ENCODE measurements at regions of chr3 and their contacts with region 1.

Region 1: DNA sequence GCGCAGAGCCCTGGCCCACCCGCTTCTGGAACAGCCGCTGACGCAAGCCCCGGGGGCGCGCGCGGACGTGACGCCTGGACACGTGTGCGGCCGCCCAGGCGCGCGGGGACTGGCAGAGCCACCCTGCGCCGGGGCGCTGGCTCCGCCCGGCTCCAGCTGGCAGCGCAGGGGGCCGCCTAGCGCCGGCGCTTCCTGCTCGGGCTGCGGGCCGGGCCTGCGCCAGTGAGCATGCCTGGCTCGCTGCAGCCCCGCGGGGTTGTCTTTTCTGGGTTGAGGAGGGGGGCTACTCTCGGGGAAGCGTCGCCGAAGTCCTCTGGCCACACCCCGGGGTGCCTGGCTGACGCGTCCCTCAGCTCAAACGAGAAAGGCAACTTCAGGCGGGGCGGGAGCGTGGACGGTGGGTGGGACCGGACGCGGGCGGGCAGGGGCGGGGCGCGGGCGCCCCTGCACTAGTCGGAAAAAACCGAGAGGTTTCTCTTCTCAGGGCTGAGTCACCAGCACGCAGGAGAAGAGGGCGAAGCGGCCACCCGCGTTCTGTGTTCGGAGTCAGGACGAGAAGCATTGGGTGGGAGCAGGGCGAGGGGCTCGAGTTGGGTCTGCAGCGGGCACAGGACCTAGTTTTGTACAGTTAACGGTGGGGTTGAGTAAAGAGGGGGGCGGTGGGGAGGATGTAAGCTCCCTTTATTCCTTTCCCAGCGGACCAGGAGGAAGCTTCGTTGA is at the start of gene SIAH2:
- DNase-seq: peak; percentile 71
- ATAC-seq: peak; percentile 78
- H3K4me3 ChIP-seq: peak within 1 kb of the TSS; percentile 94
- H3K27ac ChIP-seq: peak within 1 kb of the TSS; percentile 77
- H3K4me1 ChIP-seq: peaks cover 29% of the 10 kb centered on the region
- H3K27me3 ChIP-seq: no peaks in the 10 kb centered on the region
- CTCF ChIP-seq: no peak
- EP300 ChIP-seq: no peak; a peak in 1 of 4 replicates
- POLR2A ChIP-seq: peak; percentile 86
- RAD21 ChIP-seq: no peak
- polyA plus RNA-seq, gene SIAH2: 6.1 to 14.2 TPM

Region 2: GRCh38 chr3:150546226-150547044 is 216.8 kb before region 1 on chr3 and contains the starts of genes EIF2A and SERP1:
- CTCF ChIA-PET with region 1: interaction called, 5 read pairs
- POLR2A ChIA-PET with region 1: interaction called, 4 read pairs
- RAD21 ChIA-PET with region 1: interaction called, 11 read pairs
- SMC1A ChIA-PET with region 1: interaction called, 5 read pairs
- in situ Hi-C with region 1: no loop called
- intact Hi-C with region 1: loop called (anchors 2 kb)
- DNase-seq: peak; percentile 98
- ATAC-seq: peak; percentile 92
- H3K4me3 ChIP-seq: peak within 1 kb of the TSS; percentile 97
- H3K27ac ChIP-seq: peak within 1 kb of the TSS; percentile 96
- H3K4me1 ChIP-seq: peaks cover 3% of the 10 kb centered on the region; the same call in 1 of the 2 replicates
- H3K27me3 ChIP-seq: no peaks in the 10 kb centered on the region
- CTCF ChIP-seq: no peak
- EP300 ChIP-seq: peak in 1 of 2 experiments; percentile 44; a peak in 1 of 4 replicates
- POLR2A ChIP-seq: peak; percentile 97
- RAD21 ChIP-seq: no peak
- polyA plus RNA-seq, gene EIF2A: 126 to 130 TPM
- polyA plus RNA-seq, gene SERP1: 31.1 to 46.7 TPM

Region 3: DNA sequence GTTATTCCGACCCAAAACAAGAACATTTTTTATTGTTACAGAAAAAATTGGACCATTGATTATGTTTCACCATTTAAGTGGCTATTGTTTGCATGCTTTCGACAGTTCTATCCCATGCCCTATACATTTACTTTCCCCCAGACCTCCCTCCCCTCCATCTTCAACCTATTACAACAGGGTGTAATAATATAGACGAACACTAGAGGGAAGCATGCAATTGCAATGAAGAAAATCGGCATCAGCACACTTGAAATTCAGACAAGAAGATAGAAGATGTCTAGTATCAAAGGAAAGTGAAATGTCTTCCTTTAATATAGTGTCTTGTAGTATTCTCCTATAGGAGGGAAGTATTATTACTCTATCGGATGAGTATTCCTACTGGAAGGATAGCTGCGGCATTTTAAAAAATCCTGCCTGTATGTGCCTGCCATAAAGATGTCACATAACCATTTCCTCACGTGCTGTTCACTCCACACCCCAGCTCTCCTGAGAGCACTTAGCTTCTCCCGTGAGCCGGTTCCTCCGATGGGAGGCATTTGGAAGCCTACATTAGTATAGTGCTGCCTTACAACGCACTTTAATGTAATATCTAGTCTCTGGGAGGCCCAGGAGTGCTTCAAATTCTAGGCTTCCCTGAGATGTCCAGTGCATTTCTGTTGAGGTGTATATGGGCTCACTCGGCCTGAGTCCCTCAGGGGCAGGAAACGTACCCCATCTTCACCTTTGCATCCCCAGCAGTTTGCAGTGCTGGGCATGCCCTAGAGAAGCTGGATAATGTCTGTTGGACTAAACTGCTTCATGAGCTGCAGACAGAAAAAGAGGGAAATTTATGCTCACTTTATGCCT is 41.8 kb before region 1 on chr3:
- CTCF ChIA-PET with region 1: interaction called, 29 read pairs
- POLR2A ChIA-PET with region 1: interaction called, 8 read pairs
- RAD21 ChIA-PET with region 1: interaction called, 36 read pairs
- SMC1A ChIA-PET with region 1: interaction called, 68 read pairs
- in situ Hi-C with region 1: no loop called
- intact Hi-C with region 1: loop called (anchors 5 kb)
- DNase-seq: no peak
- ATAC-seq: peak; percentile 93
- H3K4me3 ChIP-seq: no peak overlapping the region
- H3K27ac ChIP-seq: no peak overlapping the region
- H3K4me1 ChIP-seq: no peaks in the 10 kb centered on the region
- H3K27me3 ChIP-seq: no peaks in the 10 kb centered on the region
- CTCF ChIP-seq: peak; percentile 70 to 82 (median 79); a peak in 5 of 6 replicates
- EP300 ChIP-seq: no peak
- POLR2A ChIP-seq: no peak
- RAD21 ChIP-seq: peak; percentile 100

Region 4: GRCh38 chr3:150749255-150749654 is 14.0 kb before region 1 on chr3:
- CTCF ChIA-PET with region 1: interaction called, 7 read pairs
- POLR2A ChIA-PET with region 1: interaction called, 12 read pairs
- RAD21 ChIA-PET with region 1: interaction called, 4 read pairs
- SMC1A ChIA-PET with region 1: interaction called, 11 read pairs
- in situ Hi-C with region 1: no loop called
- intact Hi-C with region 1: no loop called
- DNase-seq: no peak
- ATAC-seq: no peak
- H3K4me3 ChIP-seq: no peak overlapping the region
- H3K27ac ChIP-seq: no peak overlapping the region
- H3K4me1 ChIP-seq: peaks cover 3% of the 10 kb centered on the region; the same call in 1 of the 2 replicates
- H3K27me3 ChIP-seq: no peaks in the 10 kb centered on the region
- CTCF ChIP-seq: no peak
- EP300 ChIP-seq: no peak
- POLR2A ChIP-seq: no peak
- RAD21 ChIP-seq: no peak

Region 5: GRCh38 chr3:150793609-150794008 is 30.3 kb after region 1 on chr3:
- CTCF ChIA-PET with region 1: interaction called, 42 read pairs
- POLR2A ChIA-PET with region 1: no interaction called
- RAD21 ChIA-PET with region 1: interaction called, 3 read pairs
- SMC1A ChIA-PET with region 1: interaction called, 10 read pairs
- in situ Hi-C with region 1: no loop called
- intact Hi-C with region 1: no loop called
- DNase-seq: no peak
- ATAC-seq: peak; percentile 54
- H3K4me3 ChIP-seq: no peak overlapping the region
- H3K27ac ChIP-seq: no peak overlapping the region
- H3K4me1 ChIP-seq: no peaks in the 10 kb centered on the region; the same call in 1 of the 2 replicates
- H3K27me3 ChIP-seq: peaks cover 0 to 4% of the 10 kb centered on the region in 2 experiments; a peak in 3 of 4 replicates
- CTCF ChIP-seq: peak in 1 of 3 experiments; percentile 26; a peak in 1 of 6 replicates
- EP300 ChIP-seq: no peak
- POLR2A ChIP-seq: no peak
- RAD21 ChIP-seq: no peak